Activated T-helper 2 cell treated with anti-CD3 and anti-CD28 coated beads, Interferon-gamma antibody, Interleukin-2, Interleukin-4, amounts not matched to agents 10 μg/mL and 5 μg/mL and 100 μg/mL, durations not matched to agents 14 hours and 24 hours and 36 hours (primary cell): ENCODE measurements at regions of chr12 and their contacts with region 1.

Region 1: DNA sequence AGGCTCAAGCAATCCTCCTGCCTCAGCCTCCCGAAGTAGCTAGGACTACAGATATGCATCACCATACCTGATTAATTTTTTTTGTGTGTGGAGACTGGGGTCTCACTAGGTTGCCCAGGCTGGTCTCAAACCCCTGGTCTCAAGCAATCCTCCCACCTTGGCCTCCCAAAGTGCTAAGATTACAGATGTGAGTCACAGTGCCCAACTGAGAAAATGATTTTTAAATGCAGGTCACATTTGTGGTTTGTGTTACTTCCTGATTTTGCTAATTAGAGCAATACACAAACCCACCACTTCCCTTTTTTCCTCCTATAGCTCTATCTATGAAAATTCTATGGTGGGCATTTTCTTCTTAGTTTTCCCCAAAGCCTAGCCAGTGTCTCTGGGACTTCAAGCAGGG is 45.5 kb upstream of the TMEM263 start:
- DNase-seq: no peak
- H3K4me3 Mint-ChIP-seq: no peak overlapping the region
- H3K27ac Mint-ChIP-seq: no peak overlapping the region
- H3K4me1 Mint-ChIP-seq: peaks cover 37% of the 10 kb centered on the region
- H3K27me3 Mint-ChIP-seq: peaks cover under 1% of the 10 kb centered on the region

Region 2: GRCh38 chr12:106239241-106239950 is 670.8 kb before region 1 on chr12:
- intact Hi-C with region 1: no loop called
- DNase-seq: no peak
- H3K4me3 Mint-ChIP-seq: no peak overlapping the region
- H3K27ac Mint-ChIP-seq: no peak overlapping the region
- H3K4me1 Mint-ChIP-seq: no peaks in the 10 kb centered on the region
- H3K27me3 Mint-ChIP-seq: no peaks in the 10 kb centered on the region

Region 3: DNA sequence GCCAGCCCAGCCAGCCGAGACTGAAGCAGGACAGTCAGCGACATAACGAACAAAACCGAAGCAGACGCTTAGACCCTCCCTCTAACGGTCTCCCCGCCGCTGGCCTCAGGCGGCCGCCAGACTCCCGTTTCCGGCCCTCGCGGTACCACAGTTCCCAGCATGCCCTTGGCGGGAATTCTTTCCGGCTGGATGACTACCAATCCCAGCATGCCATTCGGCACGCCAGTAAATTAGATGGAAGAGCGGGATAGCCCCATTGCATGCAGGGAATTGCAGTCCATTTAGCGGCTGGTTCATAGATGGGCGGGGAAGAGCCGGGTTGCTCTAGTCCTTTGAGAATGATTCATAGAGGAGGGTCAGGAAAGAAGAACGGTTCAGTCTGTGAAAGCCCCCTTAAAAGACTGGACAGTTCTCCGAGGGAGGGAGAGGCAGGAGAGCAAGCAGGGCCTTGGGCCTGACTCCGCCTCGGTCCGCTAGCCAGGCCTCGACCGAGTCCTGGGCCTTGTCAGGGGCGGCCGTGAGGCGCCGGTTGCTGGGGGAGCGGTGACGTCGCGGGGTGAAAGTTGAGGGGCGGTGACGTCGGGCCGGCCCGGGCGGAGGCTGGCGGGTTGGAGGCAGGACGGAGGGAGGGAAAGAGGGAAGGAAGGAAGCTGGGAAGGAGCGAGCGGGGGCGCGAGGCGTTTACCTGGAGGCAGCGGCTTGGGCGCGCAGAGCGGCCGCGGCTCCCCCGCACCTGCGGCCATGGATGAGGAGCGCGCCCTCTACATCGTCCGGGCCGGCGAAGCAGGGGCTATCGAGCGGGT is 136.0 kb before region 1 on chr12 and contains the start of gene RIC8B:
- intact Hi-C with region 1: loop called (anchors 2 kb)
- DNase-seq: peak; percentile 76
- H3K4me3 Mint-ChIP-seq: peak within 1 kb of the TSS; percentile 96
- H3K27ac Mint-ChIP-seq: peak within 1 kb of the TSS; percentile 92
- H3K4me1 Mint-ChIP-seq: peaks cover 18% of the 10 kb centered on the region
- H3K27me3 Mint-ChIP-seq: peaks cover 5% of the 10 kb centered on the region
- total RNA-seq, gene RIC8B: 11.4 and 16.4 TPM in 2 replicates

Region 4: DNA sequence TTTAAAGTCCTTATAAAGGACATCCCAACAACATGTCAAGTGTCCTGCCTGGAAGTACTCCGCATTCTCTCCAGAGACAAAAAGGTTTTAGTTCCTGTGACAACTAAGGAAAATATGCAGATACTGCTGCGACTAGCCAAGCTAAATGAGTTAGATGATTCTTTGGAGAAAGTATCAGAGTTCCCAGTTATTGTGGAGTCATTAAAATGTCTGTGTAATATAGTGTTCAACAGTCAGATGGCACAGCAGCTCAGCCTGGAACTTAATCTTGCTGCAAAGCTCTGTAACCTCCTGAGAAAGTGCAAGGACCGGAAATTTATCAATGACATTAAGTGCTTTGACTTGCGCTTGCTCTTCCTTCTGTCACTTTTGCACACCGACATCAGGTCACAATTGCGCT is 95.5 kb before region 1 on chr12:
- intact Hi-C with region 1: no loop called
- DNase-seq: no peak
- H3K4me3 Mint-ChIP-seq: no peak overlapping the region
- H3K27ac Mint-ChIP-seq: no peak overlapping the region
- H3K4me1 Mint-ChIP-seq: no peaks in the 10 kb centered on the region
- H3K27me3 Mint-ChIP-seq: no peaks in the 10 kb centered on the region

Region 5: GRCh38 chr12:106855221-106855758 is 54.9 kb before region 1 on chr12:
- intact Hi-C with region 1: loop called (anchors 5 kb)
- DNase-seq: no peak
- H3K4me3 Mint-ChIP-seq: no peak overlapping the region
- H3K27ac Mint-ChIP-seq: no peak overlapping the region
- H3K4me1 Mint-ChIP-seq: peaks cover 9% of the 10 kb centered on the region
- H3K27me3 Mint-ChIP-seq: no peaks in the 10 kb centered on the region

Region 6: DNA sequence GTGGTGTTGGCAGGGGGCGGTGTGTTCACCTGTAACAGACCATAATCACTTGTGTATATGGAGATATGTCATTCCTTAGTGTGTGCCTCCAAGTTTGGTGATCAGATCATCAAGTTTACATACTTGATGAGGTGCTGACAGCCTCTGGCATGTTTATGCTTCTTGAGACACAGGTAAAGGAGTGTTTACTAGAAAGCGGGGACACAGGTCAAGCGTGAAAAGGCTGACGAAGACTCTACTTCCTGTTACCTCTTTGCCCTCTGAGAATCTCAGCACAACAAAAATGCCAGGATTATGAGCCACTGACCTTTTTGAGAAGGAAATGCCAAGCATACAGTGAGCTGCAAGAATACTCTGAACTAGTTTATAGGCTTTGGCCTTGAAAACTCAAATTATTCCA is 821.2 kb after region 1 on chr12:
- intact Hi-C with region 1: no loop called
- DNase-seq: no peak
- H3K4me3 Mint-ChIP-seq: no peak overlapping the region
- H3K27ac Mint-ChIP-seq: no peak overlapping the region
- H3K4me1 Mint-ChIP-seq: no peaks in the 10 kb centered on the region
- H3K27me3 Mint-ChIP-seq: no peaks in the 10 kb centered on the region